Activated T-helper 2 cell treated with anti-CD3 and anti-CD28 coated beads, Interferon-gamma antibody, Interleukin-2, Interleukin-4, amounts not matched to agents 10 μg/mL and 5 μg/mL and 100 μg/mL, durations not matched to agents 14 hours and 24 hours and 36 hours (primary cell): ENCODE measurements at regions of chr20 and their contacts with region 1.

Region 1: GRCh38 chr20:815914-816606 is 17.5 kb upstream of the FAM110A start:
- DNase-seq: peak; percentile 47
- H3K4me3 Mint-ChIP-seq: no peak overlapping the region
- H3K27ac Mint-ChIP-seq: no peak overlapping the region
- H3K4me1 Mint-ChIP-seq: no peaks in the 10 kb centered on the region
- H3K27me3 Mint-ChIP-seq: peaks cover 7% of the 10 kb centered on the region

Region 2: DNA sequence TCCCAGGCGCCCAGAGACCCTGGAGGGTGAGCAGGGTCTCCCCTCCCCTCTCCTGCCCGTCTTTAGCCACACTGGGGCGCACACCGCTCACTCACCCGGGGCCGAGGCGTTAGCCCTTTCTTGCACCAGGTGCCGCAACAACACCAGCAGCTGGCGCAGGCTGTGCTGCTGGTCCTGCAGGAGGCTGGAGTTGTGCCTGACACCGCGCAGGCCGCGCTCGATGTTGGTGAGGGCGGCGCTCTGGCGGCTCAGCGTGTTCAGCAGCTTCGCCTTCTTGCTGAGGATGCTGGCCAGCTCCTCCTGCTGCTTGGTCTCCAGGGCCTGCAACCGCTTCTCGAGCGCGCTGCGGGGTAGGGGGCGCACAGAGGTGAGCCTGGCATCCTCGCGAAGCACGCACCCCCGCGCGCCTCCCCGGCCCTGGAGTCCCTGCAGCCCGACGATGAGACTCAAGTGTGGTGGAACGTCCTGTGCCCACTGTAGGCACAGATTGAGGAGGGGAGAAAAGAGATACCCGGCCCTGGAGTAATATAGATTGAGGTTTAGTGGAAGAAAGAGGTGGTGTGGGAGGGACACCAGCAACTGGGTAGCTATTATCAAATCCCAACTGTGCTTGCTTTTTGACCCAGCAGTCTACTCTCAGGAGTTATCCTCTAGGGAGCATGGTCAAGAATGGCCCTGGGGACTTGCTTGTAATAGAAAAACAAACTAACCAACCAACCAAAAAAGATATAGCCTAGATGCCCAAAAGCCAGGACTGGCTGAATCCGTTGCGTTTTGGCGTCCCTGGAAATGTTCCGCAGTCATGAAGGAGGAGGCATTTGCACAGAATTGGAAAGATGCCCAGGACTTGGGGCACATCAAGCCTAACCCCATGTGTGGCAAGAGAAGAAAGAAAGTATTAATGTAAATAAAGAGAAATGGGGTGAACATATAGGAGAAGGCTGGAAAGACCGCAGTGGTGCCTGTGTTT is 69.2 kb after region 1 on chr20:
- intact Hi-C with region 1: loop called (anchors 5 kb)
- DNase-seq: no peak
- H3K4me3 Mint-ChIP-seq: no peak overlapping the region
- H3K27ac Mint-ChIP-seq: no peak overlapping the region
- H3K4me1 Mint-ChIP-seq: peaks cover 11% of the 10 kb centered on the region
- H3K27me3 Mint-ChIP-seq: peaks cover 15% of the 10 kb centered on the region

Region 3: GRCh38 chr20:956330-956951 is 140.4 kb after region 1 on chr20:
- intact Hi-C with region 1: loop called (anchors 1 kb)
- DNase-seq: peak; percentile 59
- H3K4me3 Mint-ChIP-seq: no peak overlapping the region
- H3K27ac Mint-ChIP-seq: no peak overlapping the region
- H3K4me1 Mint-ChIP-seq: no peaks in the 10 kb centered on the region
- H3K27me3 Mint-ChIP-seq: peaks cover 6% of the 10 kb centered on the region

Region 4: GRCh38 chr20:973785-974194 is 157.7 kb after region 1 on chr20:
- intact Hi-C with region 1: loop called (anchors 5 kb)
- DNase-seq: peak; percentile 19
- H3K4me3 Mint-ChIP-seq: no peak overlapping the region
- H3K27ac Mint-ChIP-seq: no peak overlapping the region
- H3K4me1 Mint-ChIP-seq: peaks cover 3% of the 10 kb centered on the region
- H3K27me3 Mint-ChIP-seq: peaks cover 1% of the 10 kb centered on the region

Region 5: GRCh38 chr20:1108437-1108920 is 292.4 kb after region 1 on chr20:
- intact Hi-C with region 1: loop called (anchors 5 kb)
- DNase-seq: no peak
- H3K4me3 Mint-ChIP-seq: no peak overlapping the region
- H3K27ac Mint-ChIP-seq: no peak overlapping the region
- H3K4me1 Mint-ChIP-seq: no peaks in the 10 kb centered on the region
- H3K27me3 Mint-ChIP-seq: peaks cover 3% of the 10 kb centered on the region

Region 6: DNA sequence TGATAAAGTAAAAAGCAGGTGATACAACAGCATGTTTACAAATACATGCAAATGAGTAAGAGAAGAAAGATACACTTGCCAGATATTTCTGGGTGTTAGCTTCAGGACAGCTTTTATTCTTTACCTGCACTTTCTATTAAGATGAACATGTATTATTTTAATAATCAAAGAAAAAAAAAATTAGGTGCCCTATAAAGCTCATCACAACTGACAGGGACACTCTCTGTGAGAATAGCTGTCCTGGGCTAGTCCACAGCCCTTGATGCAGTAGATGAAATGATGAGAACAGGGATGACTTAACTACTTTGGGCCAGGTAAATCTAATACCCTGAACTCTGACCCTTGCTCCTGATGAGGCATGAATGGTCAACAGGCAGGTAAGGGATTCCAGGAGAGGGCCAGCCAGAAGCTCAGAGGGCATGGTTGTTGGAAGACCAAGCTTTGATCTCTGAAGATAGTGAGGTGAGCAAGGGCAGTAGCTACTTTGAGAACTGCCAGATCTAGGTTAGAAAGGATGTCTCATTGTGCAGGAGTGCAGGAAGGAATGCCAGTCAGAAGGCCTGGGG is 634.9 kb after region 1 on chr20:
- intact Hi-C with region 1: no loop called
- DNase-seq: no peak
- H3K4me3 Mint-ChIP-seq: no peak overlapping the region
- H3K27ac Mint-ChIP-seq: no peak overlapping the region
- H3K4me1 Mint-ChIP-seq: no peaks in the 10 kb centered on the region
- H3K27me3 Mint-ChIP-seq: no peaks in the 10 kb centered on the region